ENCODE measurements at regions of chr15 and their contacts with region 1.

Region 1: DNA sequence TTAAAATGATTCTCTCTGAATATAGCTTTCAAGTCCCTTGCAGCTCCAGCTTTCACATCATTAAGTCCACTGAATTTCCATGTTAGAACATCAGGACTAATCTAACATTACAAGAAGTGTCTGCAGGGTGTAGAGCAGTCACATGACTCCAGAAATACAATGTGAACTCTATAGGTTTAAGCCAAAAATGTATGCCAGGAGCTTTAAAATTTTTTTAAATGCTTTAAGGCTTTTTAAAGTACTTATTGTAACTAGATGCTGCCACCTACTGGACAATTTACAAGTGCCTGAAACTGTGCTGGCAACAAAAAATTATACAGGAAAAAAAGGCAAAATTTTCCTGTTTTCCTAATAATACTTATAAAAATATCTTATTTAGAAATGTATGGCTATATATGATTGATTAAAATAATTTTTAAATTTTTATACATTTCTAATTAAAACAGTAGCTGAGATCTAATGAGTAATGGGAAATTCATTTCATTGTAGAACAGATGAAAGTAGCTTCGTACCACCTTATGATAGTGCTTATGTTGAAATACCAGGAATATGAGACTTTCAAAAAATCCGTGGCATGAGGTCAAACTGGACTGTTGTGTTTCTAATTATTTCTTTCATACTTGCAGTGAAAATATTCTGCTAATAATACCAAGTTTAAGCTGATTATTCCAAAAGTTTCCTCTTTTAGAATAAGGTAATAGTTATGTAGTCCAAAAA is 25.7 kb downstream of the FSIP1 start:
- DNase-seq: no peak
- H3K4me3 ChIP-seq: no peak overlapping the region
- CTCF ChIP-seq: peak in 1 of 3 donors; percentile 74
- POLR2A ChIP-seq: no peak

Region 2: GRCh38 chr15:38699633-38700230 is 1057.2 kb before region 1 on chr15:
- intact Hi-C with region 1: loop called (anchors 10 kb)
- DNase-seq: peak in 1 of 2 donors; percentile 52
- H3K4me3 ChIP-seq: no peak overlapping the region
- CTCF ChIP-seq: peak in 1 of 3 donors; percentile 60
- POLR2A ChIP-seq: no peak

Region 3: GRCh38 chr15:38817427-38818156 is 939.4 kb before region 1 on chr15:
- intact Hi-C with region 1: loop called (anchors 10 kb)
- DNase-seq: peak; percentile 80 to 96
- H3K4me3 ChIP-seq: no peak overlapping the region
- CTCF ChIP-seq: peak in 1 of 3 donors; percentile 96
- POLR2A ChIP-seq: no peak

Region 4: GRCh38 chr15:39686000-39686613 is 70.9 kb before region 1 on chr15:
- intact Hi-C with region 1: loop called (anchors 5 kb)
- DNase-seq: peak in 1 of 2 donors; percentile 28
- H3K4me3 ChIP-seq: no peak overlapping the region
- CTCF ChIP-seq: no peak
- POLR2A ChIP-seq: no peak

Region 5: GRCh38 chr15:39736412-39737197 is 20.4 kb before region 1 on chr15:
- intact Hi-C with region 1: no loop called
- DNase-seq: no peak
- H3K4me3 ChIP-seq: no peak overlapping the region
- CTCF ChIP-seq: no peak
- POLR2A ChIP-seq: no peak

Measured in lower leg skin (tissue), 4 donors.